GM10248 (cell line): ENCODE measurements at regions of chr2 and their contacts with region 1.

Region 1: DNA sequence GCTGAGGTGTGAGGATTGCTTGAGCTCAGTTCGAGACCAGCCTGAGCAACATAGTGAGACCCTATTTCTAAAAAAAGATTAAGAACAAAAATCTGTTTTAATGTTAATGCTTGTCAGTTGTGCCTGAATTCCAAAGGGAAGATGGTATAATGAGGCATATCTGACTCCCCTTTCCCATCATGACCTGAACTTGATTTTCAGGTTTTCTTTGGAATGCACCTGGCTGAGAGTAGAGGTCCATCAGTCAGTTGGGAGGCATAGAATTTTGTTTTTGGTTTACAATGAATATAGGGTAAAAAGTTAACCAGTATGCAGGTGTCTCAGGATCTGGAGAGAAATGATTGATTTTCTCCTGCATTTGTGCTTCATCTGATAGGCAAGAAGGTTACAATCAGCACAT is 20.4 kb downstream of the RPIA start:
- DNase-seq: no peak
- CTCF ChIP-seq: no peak

Region 2: DNA sequence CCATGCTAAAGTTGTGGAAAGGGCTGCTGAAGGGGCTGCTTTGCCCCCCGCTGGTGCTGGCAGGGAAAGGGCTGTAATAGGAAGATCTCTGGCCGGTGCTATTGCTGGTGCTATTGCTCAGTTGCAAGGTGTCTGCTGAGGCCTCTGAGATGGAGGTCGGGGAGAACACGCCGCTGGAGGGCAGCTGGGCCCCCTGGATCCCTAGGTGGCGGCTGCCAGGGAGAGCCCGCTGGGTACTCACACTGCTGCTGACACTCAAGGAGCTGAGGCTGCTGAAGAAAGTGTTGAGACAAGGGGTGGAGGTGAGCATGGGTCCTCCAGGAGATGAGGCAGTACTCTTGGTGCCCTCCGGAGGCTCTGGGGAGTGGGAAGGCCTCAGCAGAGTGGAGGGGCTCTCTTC is 263.7 kb before region 1 on chr2:
- CTCF ChIA-PET with region 1: no interaction called
- POLR2A ChIA-PET with region 1: no interaction called
- DNase-seq: no peak
- CTCF ChIP-seq: no peak

Region 3: GRCh38 chr2:88691339-88692183 is 20.3 kb before region 1 on chr2 and contains the start of gene RPIA:
- CTCF ChIA-PET with region 1: interaction called, 11 read pairs
- POLR2A ChIA-PET with region 1: no interaction called
- DNase-seq: peak; percentile 98
- CTCF ChIP-seq: peak; percentile 75

Region 4: DNA sequence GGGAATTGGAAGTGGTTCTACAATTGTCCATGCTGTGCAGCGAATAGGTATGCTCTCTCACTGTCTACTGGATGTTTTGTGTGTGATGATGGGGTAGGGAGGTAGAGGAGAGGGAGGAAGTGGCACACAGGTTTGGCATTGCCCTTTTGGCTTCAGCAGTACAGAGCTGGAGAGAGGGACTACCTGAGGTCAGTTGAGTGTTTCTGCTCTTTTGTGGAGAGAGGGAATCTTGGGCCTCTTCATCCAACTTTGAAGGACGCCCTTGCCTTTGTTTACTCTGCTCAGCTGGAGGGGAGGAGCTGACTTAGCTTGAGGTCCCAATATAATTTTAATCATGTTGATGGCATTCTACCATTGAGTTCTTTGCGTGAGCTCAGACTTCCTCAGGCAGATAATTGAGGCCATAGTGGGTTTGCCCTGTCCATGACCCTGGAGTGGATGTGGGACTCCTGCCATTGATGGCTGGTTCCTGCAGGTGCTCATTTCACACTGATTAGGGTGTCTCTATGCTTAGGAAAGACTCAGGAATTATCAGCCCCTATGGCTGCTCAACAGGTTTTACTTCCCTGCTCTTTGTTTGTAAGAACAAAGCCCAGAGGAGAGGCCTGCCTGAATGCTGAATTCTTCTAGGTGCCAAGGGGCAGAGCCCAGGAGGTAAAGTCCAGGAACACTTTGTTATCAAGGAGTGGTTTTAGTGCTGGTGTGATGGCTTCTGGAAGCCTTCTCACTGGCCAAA is 13.2 kb before region 1 on chr2:
- CTCF ChIA-PET with region 1: interaction called, 15 read pairs
- POLR2A ChIA-PET with region 1: no interaction called
- DNase-seq: no peak
- CTCF ChIP-seq: no peak